ENCODE measurements at regions of chr2 and their contacts with region 1.

Region 1: DNA sequence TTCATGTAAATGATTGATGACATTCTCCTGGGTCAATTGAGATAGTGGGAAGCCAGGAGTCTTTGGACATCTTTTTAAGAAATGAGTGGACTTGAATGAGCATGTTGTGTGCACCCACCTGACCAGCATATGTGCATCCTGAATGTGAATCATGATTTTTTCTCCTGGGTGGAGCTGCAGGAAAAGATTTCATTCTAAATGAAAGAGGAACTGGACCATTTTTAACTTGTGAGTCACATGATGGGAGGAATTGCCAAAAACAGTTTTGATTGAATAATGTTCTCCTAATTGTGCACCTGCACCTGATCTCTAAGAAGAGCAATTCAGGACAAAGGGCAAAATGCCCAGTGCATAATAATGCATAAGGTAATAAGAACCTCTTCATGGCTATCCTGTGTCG is 32.3 kb downstream of the COPS8 start:
- DNase-seq: no peak
- H3K4me3 ChIP-seq: no peak overlapping the region
- H3K27ac ChIP-seq: peak overlapping the region; percentile 20
- H3K4me1 ChIP-seq: no peaks in the 10 kb centered on the region
- H3K27me3 ChIP-seq: no peaks in the 10 kb centered on the region
- CTCF ChIP-seq: no peak

Region 2: DNA sequence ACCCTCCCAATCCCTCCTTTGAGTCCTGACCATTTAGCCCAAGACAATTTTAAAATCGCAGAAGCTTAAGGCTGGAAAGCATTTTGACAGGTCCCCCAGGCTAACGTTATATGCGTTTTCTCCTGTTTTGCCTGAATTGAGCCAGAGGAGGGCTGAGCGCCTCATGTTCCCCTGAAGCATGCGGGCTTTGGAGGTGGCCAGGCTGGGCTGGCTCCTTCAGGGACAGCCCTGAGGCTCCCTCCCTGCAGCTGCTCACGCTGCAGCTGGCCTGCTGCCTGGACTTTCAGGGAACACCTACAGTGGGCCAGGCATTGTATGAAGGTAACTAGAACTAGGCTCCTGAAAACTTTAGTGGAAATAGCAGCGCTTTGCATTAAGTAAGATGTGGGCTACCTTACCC is 369.2 kb before region 1 on chr2:
- intact Hi-C with region 1: no loop called
- DNase-seq: peak; percentile 47
- H3K4me3 ChIP-seq: no peak overlapping the region
- H3K27ac ChIP-seq: peak overlapping the region; percentile 77
- H3K4me1 ChIP-seq: peaks cover 32% of the 10 kb centered on the region
- H3K27me3 ChIP-seq: no peaks in the 10 kb centered on the region
- CTCF ChIP-seq: peak; percentile 11

Region 3: DNA sequence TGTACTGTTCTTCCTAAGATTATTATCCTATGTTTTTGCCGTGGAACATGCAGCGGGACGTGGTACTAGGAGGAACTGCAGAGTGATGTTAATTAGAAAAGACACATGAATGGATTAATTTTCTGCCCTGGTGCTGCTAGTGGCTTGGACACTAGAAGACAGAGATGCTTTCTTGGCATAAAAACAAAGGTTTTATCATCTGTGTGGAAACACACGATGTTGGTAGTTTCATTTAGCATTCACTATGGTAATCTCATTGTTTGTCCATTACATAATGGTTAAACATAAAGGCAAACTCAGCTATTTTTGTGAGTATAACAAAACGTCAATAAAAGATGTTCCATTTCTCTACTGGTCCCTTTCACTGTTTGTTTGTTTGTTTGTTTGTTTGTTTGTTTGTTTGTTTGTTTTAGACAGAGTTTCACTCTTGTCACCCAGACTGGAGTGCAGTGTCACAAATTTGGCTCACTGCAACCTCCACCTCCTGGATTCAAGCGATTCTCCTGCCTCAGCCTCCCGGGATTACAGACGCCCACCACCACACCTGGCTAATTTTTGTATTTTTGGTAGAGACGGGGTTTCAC is 273.2 kb after region 1 on chr2:
- intact Hi-C with region 1: loop called (anchors 10 kb)
- DNase-seq: no peak
- H3K4me3 ChIP-seq: no peak overlapping the region
- H3K27ac ChIP-seq: no peak overlapping the region
- H3K4me1 ChIP-seq: peaks cover 6% of the 10 kb centered on the region
- H3K27me3 ChIP-seq: peaks cover 34% of the 10 kb centered on the region
- CTCF ChIP-seq: no peak